Calu3 (cell line): ENCODE measurements at regions of chr1 and their contacts with region 1.

Region 1: DNA sequence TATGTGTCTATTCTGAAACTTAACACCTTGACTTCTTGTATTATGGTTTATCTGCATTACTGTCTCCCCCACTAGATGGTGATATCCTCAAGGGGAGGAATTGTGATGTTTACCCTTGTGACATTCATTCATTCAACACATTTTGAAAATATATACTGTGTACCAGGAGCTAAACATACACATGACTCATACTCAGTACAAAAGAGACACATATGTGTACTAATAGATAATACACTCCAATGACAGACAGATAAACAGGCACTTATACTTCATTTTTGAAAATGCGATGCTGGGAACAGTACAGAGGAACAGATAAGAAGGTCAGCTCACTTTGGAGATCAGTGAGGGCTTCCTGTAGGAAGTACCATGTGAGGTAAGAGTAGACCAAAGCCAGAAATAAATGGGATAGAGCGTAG is 8.9 kb upstream of the RAB3GAP2 start:
- DNase-seq: peak; percentile 8
- H3K4me3 Mint-ChIP-seq: no peak overlapping the region
- H3K27ac Mint-ChIP-seq: no peak overlapping the region
- H3K4me1 Mint-ChIP-seq: no peaks in the 10 kb centered on the region
- H3K27me3 Mint-ChIP-seq: peaks cover 8% of the 10 kb centered on the region
- CTCF ChIP-seq: no peak

Region 2: DNA sequence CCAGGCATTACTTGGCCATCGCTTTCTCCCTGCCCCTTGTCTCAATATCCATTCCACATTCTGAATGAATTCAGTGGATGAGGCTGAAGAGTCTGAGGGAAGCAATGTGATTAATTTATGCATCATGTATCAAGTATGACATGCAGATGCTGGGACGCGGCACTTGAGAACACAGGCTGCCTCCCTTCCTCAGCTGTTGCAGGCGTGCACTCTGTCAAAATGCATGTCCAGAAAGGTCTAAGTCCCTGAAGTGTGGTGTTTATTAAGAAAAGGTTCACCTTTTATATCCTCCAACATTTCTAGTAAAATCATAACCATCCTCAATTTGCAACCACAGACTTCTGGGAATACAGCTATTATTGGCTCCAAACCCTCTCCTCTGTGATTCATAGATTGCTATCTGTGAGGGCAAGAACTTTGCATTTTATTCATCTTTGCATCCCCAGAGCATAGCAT is 13.7 kb after region 1 on chr1:
- CTCF ChIA-PET with region 1: interaction called, 12 read pairs
- intact Hi-C with region 1: no loop called
- DNase-seq: no peak
- H3K4me3 Mint-ChIP-seq: no peak overlapping the region
- H3K27ac Mint-ChIP-seq: no peak overlapping the region
- H3K4me1 Mint-ChIP-seq: no peaks in the 10 kb centered on the region
- H3K27me3 Mint-ChIP-seq: peaks cover 10% of the 10 kb centered on the region
- CTCF ChIP-seq: no peak

Region 3: GRCh38 chr1:220462776-220463175 is 181.6 kb after region 1 on chr1:
- CTCF ChIA-PET with region 1: no interaction called
- intact Hi-C with region 1: no loop called
- DNase-seq: peak; percentile 42
- H3K4me3 Mint-ChIP-seq: no peak overlapping the region
- H3K27ac Mint-ChIP-seq: no peak overlapping the region
- H3K4me1 Mint-ChIP-seq: no peaks in the 10 kb centered on the region
- H3K27me3 Mint-ChIP-seq: no peaks in the 10 kb centered on the region
- CTCF ChIP-seq: no peak

Region 4: GRCh38 chr1:220680085-220680687 is 399.0 kb after region 1 on chr1:
- CTCF ChIA-PET with region 1: no interaction called
- intact Hi-C with region 1: loop called (anchors 5 kb)
- DNase-seq: peak; percentile 37
- H3K4me3 Mint-ChIP-seq: no peak overlapping the region
- H3K27ac Mint-ChIP-seq: no peak overlapping the region
- H3K4me1 Mint-ChIP-seq: peaks cover 8% of the 10 kb centered on the region
- H3K27me3 Mint-ChIP-seq: no peaks in the 10 kb centered on the region
- CTCF ChIP-seq: peak; percentile 79